ENCODE measurements at regions of chr2 and their contacts with region 1.

Region 1: GRCh38 chr2:230660294-230661060 is 52.2 kb upstream of the CAB39 start:
- DNase-seq: peak in 1 of 2 donors; percentile 71
- ATAC-seq: peak; percentile 36 to 74 (median 66)
- H3K4me3 ChIP-seq: no peak overlapping the region
- H3K4me3 Mint-ChIP-seq: peak overlapping the region; percentile 75
- H3K27ac ChIP-seq: peak overlapping the region; percentile 8
- H3K27ac Mint-ChIP-seq: peak overlapping the region; percentile 79 to 89
- H3K4me1 ChIP-seq: peaks cover 83% of the 10 kb centered on the region
- H3K4me1 Mint-ChIP-seq: peaks cover 66 to 83% of the 10 kb centered on the region in 2 donors
- H3K27me3 ChIP-seq: no peaks in the 10 kb centered on the region
- H3K27me3 Mint-ChIP-seq: no peaks in the 10 kb centered on the region
- CTCF ChIP-seq: no peak

Region 2: GRCh38 chr2:230712443-230713330 is 52.2 kb after region 1 on chr2 and contains the start of gene CAB39:
- intact Hi-C with region 1: loop called (anchors 2 kb)
- DNase-seq: peak; percentile 88 to 95
- ATAC-seq: peak; percentile 86 to 96 (median 92)
- H3K4me3 ChIP-seq: peak within 1 kb of the TSS; percentile 81
- H3K4me3 Mint-ChIP-seq: peak within 1 kb of the TSS; percentile 98
- H3K27ac ChIP-seq: peak within 1 kb of the TSS; percentile 59
- H3K27ac Mint-ChIP-seq: peak within 1 kb of the TSS; percentile 92 to 95
- H3K4me1 ChIP-seq: peaks cover 35% of the 10 kb centered on the region
- H3K4me1 Mint-ChIP-seq: peaks cover 40 to 46% of the 10 kb centered on the region in 2 donors
- H3K27me3 ChIP-seq: no peaks in the 10 kb centered on the region
- H3K27me3 Mint-ChIP-seq: no peaks in the 10 kb centered on the region
- CTCF ChIP-seq: peak; percentile 75
- total RNA-seq, gene CAB39: 75.4 to 96.5 (median 90.5) TPM

Region 3: DNA sequence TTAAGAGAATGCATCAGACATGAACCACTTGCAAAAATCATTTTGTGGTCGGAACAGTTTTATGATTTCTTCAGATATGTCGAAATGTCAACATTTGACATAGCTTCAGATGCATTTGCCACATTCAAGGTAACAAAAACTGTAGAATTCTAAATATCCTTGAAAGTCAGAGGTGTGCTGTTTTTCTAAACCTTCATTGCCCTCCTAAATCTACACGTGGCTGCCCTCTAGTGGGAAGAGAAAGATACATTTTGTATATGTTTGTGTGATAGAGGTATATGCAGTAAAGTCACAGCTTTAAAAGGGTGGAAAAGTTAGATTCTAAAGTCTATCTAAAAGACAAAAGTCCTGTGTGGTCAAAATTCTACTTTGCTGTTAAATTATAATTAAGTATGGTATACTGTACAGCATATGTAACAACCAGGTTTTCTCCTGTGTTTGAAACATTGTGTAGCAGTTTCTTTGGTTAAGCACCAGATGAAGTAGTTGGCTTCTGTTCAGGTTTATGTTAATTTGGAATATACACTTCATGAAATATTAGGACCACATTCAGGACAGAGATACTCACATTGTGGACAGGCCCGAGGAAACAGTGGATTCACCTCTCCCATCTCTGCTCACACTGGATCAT is 138.4 kb after region 1 on chr2:
- intact Hi-C with region 1: loop called (anchors 5 kb)
- DNase-seq: peak in 1 of 2 donors; percentile 80
- ATAC-seq: peak; percentile 30 to 48 (median 46)
- H3K4me3 ChIP-seq: no peak overlapping the region
- H3K4me3 Mint-ChIP-seq: no peak overlapping the region
- H3K27ac ChIP-seq: no peak overlapping the region
- H3K27ac Mint-ChIP-seq: no peak overlapping the region
- H3K4me1 ChIP-seq: peaks cover 18% of the 10 kb centered on the region
- H3K4me1 Mint-ChIP-seq: peaks cover 22 to 24% of the 10 kb centered on the region in 2 donors
- H3K27me3 ChIP-seq: no peaks in the 10 kb centered on the region
- H3K27me3 Mint-ChIP-seq: no peaks in the 10 kb centered on the region
- CTCF ChIP-seq: peak; percentile 78

Region 4: DNA sequence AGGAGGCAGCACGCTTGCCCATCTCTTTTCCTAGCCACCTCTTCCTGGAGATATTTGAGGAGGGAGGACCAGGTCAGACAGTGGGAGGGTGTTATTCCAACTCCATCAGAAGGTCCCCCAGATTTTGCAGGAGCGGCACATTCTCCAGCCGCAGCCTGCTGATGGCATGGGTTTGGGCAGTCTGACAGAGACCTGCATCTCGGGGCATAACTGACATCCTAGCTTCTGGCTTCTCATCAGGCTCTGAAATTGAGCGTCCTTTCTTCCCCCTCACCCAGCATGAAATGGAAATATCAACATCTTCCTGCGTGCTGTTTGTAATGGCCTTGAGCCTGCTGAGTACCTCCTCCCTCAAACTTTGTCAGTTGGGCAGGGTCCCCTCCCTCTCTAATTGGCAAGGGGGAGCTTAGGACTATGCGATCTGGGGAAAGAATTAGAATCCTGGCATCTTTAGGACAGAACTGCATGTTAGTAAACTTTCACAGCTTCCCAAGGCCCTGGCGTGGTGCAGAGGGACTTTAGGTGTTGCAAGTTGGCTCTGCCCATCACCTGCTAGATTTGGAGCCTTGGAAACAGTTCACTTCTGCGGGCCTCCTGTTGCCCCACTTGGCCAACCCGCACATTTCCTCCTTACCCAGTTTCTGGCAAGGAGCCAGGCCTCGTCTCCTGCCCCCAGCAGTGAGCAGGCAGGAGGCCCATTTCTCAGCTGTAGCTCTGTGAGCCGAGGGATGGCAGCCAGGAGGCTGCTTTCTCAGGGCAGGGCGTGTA is 206.5 kb after region 1 on chr2:
- intact Hi-C with region 1: no loop called
- DNase-seq: peak in 1 of 2 donors; percentile 91
- ATAC-seq: peak in 1 of 3 donors; percentile 50
- H3K4me3 ChIP-seq: no peak overlapping the region
- H3K4me3 Mint-ChIP-seq: peak overlapping the region; percentile 40
- H3K27ac ChIP-seq: peak overlapping the region; percentile 10
- H3K27ac Mint-ChIP-seq: no peak overlapping the region
- H3K4me1 ChIP-seq: peaks cover 60% of the 10 kb centered on the region
- H3K4me1 Mint-ChIP-seq: peaks cover 24 to 60% of the 10 kb centered on the region in 2 donors
- H3K27me3 ChIP-seq: peaks cover 27% of the 10 kb centered on the region
- H3K27me3 Mint-ChIP-seq: peaks cover 40 to 44% of the 10 kb centered on the region in 2 donors
- CTCF ChIP-seq: no peak

Measured in natural killer cell (primary cell).